Endothelial cell of umbilical vein (primary cell): ENCODE measurements at regions of chr11 and their contacts with region 1.

Region 1: GRCh38 chr11:119481021-119481666 is 58.2 kb upstream of the THY1 start:
- DNase-seq: peak; percentile 60
- H3K4me3 ChIP-seq: no peak overlapping the region
- H3K27ac ChIP-seq: no peak overlapping the region
- H3K4me1 ChIP-seq: no peaks in the 10 kb centered on the region
- H3K27me3 ChIP-seq: no peaks in the 10 kb centered on the region
- CTCF ChIP-seq: peak; percentile 96 to 98
- POLR2A ChIP-seq: no peak

Region 2: GRCh38 chr11:119417726-119418540 is 63.2 kb before region 1 on chr11:
- CTCF ChIA-PET with region 1: no interaction called
- POLR2A ChIA-PET with region 1: no interaction called
- dilution Hi-C with region 1: no loop called
- intact Hi-C with region 1: no loop called
- DNase-seq: no peak
- H3K4me3 ChIP-seq: no peak overlapping the region
- H3K27ac ChIP-seq: no peak overlapping the region
- H3K4me1 ChIP-seq: no peaks in the 10 kb centered on the region
- H3K27me3 ChIP-seq: peaks cover 19% of the 10 kb centered on the region in 2 experiments
- CTCF ChIP-seq: no peak
- POLR2A ChIP-seq: no peak

Region 3: DNA sequence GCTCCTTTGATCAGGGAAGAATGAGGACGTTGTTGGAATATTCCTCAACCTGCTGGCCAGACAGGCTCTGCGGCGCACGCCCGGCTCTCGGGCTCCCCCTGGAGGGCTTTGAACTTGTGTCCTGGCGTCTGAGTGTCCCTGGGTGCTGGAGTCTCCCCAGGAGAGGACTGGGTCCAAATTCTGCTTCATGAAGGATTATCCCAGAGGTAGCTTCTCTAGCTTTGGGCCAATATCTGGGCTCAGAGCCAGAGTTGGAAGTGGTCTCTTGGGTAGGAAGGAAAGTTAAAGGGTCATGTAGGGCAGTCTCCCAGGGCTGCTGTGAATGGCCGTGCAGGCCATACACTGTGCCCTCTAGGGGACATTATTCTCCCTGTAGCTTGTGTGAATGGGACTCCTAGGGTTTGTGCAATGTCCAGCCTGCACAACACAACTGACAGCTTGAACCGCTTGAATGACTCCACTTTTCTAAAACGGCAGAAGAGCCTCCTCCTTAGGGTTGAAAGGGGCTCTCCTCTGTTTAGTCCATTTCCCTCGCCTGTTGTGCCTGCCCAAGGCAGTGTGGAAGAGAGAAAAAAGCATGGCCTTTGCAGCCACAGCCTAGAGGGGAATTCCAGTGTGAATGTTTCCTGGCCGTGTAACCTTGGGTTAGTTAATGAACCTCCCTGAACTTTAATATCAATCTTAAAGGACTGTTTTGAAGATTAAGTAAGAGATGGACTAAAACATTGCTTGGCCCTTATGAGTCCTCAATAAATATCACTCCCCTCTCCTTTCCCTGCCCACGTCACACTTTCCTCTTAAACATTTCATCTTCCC is 53.0 kb after region 1 on chr11:
- CTCF ChIA-PET with region 1: interaction called, 3 read pairs
- POLR2A ChIA-PET with region 1: no interaction called
- dilution Hi-C with region 1: no loop called
- intact Hi-C with region 1: loop called (anchors 1 kb)
- DNase-seq: peak; percentile 43
- H3K4me3 ChIP-seq: no peak overlapping the region
- H3K27ac ChIP-seq: no peak overlapping the region
- H3K4me1 ChIP-seq: no peaks in the 10 kb centered on the region
- H3K27me3 ChIP-seq: peaks cover 0 to 2% of the 10 kb centered on the region in 2 experiments
- CTCF ChIP-seq: peak; percentile 88 to 90
- POLR2A ChIP-seq: no peak

Region 4: GRCh38 chr11:119666463-119667131 is 185.5 kb after region 1 on chr11:
- CTCF ChIA-PET with region 1: no interaction called
- POLR2A ChIA-PET with region 1: no interaction called
- dilution Hi-C with region 1: no loop called
- intact Hi-C with region 1: loop called (anchors 1 kb)
- DNase-seq: peak; percentile 65
- H3K4me3 ChIP-seq: no peak overlapping the region
- H3K27ac ChIP-seq: no peak overlapping the region
- H3K4me1 ChIP-seq: peaks cover 8% of the 10 kb centered on the region
- H3K27me3 ChIP-seq: no peaks in the 10 kb centered on the region
- CTCF ChIP-seq: peak; percentile 87 to 95
- POLR2A ChIP-seq: no peak

Region 5: GRCh38 chr11:120013325-120014270 is 532.5 kb after region 1 on chr11:
- CTCF ChIA-PET with region 1: no interaction called
- POLR2A ChIA-PET with region 1: no interaction called
- dilution Hi-C with region 1: no loop called
- intact Hi-C with region 1: loop called (anchors 1 kb)
- DNase-seq: peak; percentile 12
- H3K4me3 ChIP-seq: no peak overlapping the region
- H3K27ac ChIP-seq: no peak overlapping the region
- H3K4me1 ChIP-seq: no peaks in the 10 kb centered on the region
- H3K27me3 ChIP-seq: no peaks in the 10 kb centered on the region
- CTCF ChIP-seq: peak; percentile 32 to 65
- POLR2A ChIP-seq: no peak

Region 6: GRCh38 chr11:120172054-120172911 is 691.1 kb after region 1 on chr11:
- CTCF ChIA-PET with region 1: no interaction called
- POLR2A ChIA-PET with region 1: no interaction called
- dilution Hi-C with region 1: no loop called
- intact Hi-C with region 1: loop called (anchors 2 kb)
- DNase-seq: peak; percentile 39
- H3K4me3 ChIP-seq: no peak overlapping the region
- H3K27ac ChIP-seq: no peak overlapping the region
- H3K4me1 ChIP-seq: peaks cover 7% of the 10 kb centered on the region
- H3K27me3 ChIP-seq: peaks cover 31 to 48% of the 10 kb centered on the region in 2 experiments
- CTCF ChIP-seq: peak; percentile 63 to 87
- POLR2A ChIP-seq: no peak